Heart right ventricle (tissue), 16 donors: ENCODE measurements at regions of chr5 and their contacts with region 1.

Region 1: DNA sequence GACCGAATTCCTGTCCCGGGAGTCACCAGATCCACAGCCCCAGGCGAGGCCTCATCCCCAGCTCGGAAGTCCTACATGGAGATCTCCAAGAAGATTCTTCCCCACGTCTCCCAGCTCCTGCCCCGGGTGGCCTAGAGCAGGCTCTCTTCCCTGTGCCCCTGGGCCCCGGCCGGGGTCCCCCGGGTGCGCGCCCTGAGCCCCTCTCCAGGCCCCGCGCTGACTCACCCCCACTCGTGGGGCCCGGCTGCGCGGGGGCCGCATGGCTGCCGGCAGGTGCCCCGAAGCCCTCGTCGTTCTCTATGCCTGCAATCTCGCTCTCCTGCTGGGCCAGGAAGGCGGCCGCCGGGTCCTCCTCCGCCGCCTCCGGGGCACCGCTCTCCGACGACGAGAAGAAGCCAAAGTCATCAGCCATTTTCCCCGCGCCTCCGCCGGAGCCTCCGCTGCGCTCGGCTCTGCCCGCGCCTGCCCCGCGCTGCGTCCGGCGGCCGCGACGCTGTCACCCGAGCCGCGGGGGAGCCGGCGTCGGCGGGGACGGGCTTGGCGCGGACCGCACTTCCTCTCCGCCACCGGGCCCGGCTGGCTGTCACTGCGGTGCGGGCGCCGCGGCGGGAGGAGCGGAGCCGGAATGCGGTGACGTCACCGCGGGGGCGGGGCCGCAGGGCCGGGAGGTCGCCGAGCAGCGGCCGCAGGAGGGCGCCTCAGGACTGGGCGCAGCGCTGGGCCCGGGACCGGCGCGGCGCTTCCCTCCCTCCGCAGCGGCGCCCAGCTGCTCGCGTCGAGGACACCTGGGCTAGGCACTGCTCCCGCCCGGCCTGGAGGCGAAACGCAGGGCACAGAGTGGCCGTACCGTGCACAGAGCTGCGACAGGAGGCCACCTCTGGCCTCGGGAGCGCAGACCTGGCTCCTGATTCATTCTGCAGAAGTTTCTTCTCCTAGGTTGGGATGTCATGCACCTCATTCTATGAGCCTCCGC is at the start of gene CLTB:
- DNase-seq: peak; percentile 88 to 95
- ATAC-seq: peak; percentile 93 to 98 (median 95)
- H3K4me3 ChIP-seq: peak within 1 kb of the TSS; percentile 80 to 100 (median 98)
- H3K27ac ChIP-seq: peak within 1 kb of the TSS; percentile 89 to 99 (median 97)
- H3K4me1 ChIP-seq: peaks cover 28 to 55% (median 48%) of the 10 kb centered on the region in 9 donors
- H3K27me3 ChIP-seq: no peaks in the 10 kb centered on the region
- CTCF ChIP-seq: peak; percentile 53 to 91 (median 79)
- total RNA-seq, gene CLTB: 192 to 246 (median 214) TPM

Region 2: GRCh38 chr5:176388444-176389134 is 27.6 kb before region 1 on chr5 and contains the starts of genes HIGD2A and NOP16:
- intact Hi-C with region 1: loop called in 1 of 10 experiments (anchors 2 kb)
- DNase-seq: peak; percentile 99 to 100
- ATAC-seq: peak; percentile 94 to 98 (median 96)
- H3K4me3 ChIP-seq: peak within 1 kb of the TSS; percentile 52 to 99 (median 78)
- H3K27ac ChIP-seq: peak within 1 kb of the TSS; percentile 91 to 99 (median 95)
- H3K4me1 ChIP-seq: peaks cover 6 to 39% (median 27%) of the 10 kb centered on the region in 9 donors
- H3K27me3 ChIP-seq: no peaks in the 10 kb centered on the region
- CTCF ChIP-seq: no peak
- total RNA-seq, gene HIGD2A: 198 to 276 (median 228) TPM
- total RNA-seq, gene NOP16: 11.3 to 25.9 (median 18.5) TPM

Region 3: DNA sequence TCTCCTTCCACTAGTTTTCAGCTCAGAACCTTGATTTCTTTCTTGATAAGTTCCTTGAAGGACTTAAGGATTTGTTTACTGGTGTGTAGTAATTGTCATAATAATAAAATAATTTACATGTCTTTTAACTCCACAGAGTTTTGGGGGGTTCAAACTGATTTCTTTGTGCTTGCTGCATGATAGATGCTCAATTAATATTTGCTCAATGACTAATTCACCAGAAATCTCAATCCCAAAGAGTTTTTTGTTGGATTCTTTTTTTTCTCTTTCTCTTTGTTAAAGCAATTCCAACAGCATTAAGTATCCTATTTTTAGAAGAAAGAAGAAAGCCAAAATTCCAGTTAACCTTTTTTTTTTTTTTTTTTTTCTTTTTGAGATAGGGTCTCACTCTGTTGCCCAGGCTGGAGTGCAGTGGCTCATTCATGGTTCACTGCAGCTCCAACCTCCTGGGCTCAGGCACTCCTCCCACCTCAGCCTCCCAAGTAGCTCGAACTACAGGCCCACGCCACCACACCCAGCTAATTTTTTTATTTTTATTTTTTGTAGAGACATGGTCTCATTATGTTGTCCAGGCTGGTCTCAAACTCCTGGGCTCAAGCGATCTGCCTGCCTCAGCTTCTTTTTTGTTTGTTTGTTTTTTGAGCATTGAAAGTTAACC is 42.8 kb after region 1 on chr5:
- intact Hi-C with region 1: no loop called
- DNase-seq: no peak
- ATAC-seq: no peak
- H3K4me3 ChIP-seq: no peak overlapping the region
- H3K27ac ChIP-seq: peak overlapping the region in 1 of 10 donors; percentile 10
- H3K4me1 ChIP-seq: peaks cover 0 to 40% (median 19%) of the 10 kb centered on the region in 9 donors
- H3K27me3 ChIP-seq: no peaks in the 10 kb centered on the region
- CTCF ChIP-seq: no peak

Region 4: GRCh38 chr5:176537608-176538504 is 121.6 kb after region 1 on chr5:
- intact Hi-C with region 1: loop called in 7 of 10 experiments (anchors 1 to 10 kb)
- DNase-seq: peak; percentile 97 to 99
- ATAC-seq: peak; percentile 84 to 94 (median 90)
- H3K4me3 ChIP-seq: peak overlapping the region; percentile 51 to 96 (median 84)
- H3K27ac ChIP-seq: peak overlapping the region; percentile 90 to 100 (median 97)
- H3K4me1 ChIP-seq: peaks cover 19 to 81% (median 65%) of the 10 kb centered on the region in 9 donors
- H3K27me3 ChIP-seq: no peaks in the 10 kb centered on the region
- CTCF ChIP-seq: no peak

Region 5: GRCh38 chr5:176573564-176574296 is 157.5 kb after region 1 on chr5:
- intact Hi-C with region 1: loop called in 1 of 10 experiments (anchors 5 kb)
- DNase-seq: peak; percentile 62 to 78
- ATAC-seq: peak; percentile 76 to 91 (median 90)
- H3K4me3 ChIP-seq: no peak overlapping the region
- H3K27ac ChIP-seq: no peak overlapping the region
- H3K4me1 ChIP-seq: peaks cover 0 to 3% (median 0%) of the 10 kb centered on the region in 9 donors
- H3K27me3 ChIP-seq: peaks cover 0 to 33% (median 5%) of the 10 kb centered on the region in 7 donors
- CTCF ChIP-seq: peak; percentile 63 to 88 (median 82)

Region 6: DNA sequence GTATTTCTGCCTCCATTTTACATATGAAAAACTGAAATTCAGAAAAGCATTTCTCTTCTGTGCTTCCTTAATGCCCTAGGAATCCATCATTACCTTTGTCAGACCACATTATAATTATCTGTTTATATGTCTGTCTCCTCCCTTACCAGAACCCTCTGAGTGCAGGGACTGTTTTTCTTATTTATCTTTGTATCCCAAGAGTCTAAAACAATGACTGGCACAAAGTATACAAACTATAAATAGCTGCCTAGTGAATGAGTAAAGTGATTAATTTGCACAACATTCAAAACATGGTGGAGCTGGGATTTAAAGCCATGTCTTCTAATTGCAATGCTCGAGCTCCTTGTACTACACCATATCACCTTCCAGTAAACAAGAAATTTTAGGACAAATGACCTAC is 532.2 kb after region 1 on chr5:
- intact Hi-C with region 1: loop called in 1 of 10 experiments (anchors 10 kb)
- DNase-seq: no peak
- ATAC-seq: peak in 3 of 8 donors; percentile 42 to 65 (median 60)
- H3K4me3 ChIP-seq: no peak overlapping the region
- H3K27ac ChIP-seq: peak overlapping the region in 4 of 10 donors; percentile 3 to 42 (median 17)
- H3K4me1 ChIP-seq: peaks cover 0 to 38% (median 21%) of the 10 kb centered on the region in 9 donors
- H3K27me3 ChIP-seq: no peaks in the 10 kb centered on the region
- CTCF ChIP-seq: no peak